AG04450 (cell line): ENCODE measurements at regions of chr9 and their contacts with region 1.

Region 1: GRCh38 chr9:127586537-127586936 is 25.5 kb upstream of the STXBP1 start:
- DNase-seq: no peak
- H3K4me3 ChIP-seq: no peak overlapping the region
- H3K27ac ChIP-seq: no peak overlapping the region
- H3K27me3 ChIP-seq: no peaks in the 10 kb centered on the region
- CTCF ChIP-seq: peak; percentile 94

Region 2: GRCh38 chr9:126844085-126844484 is 742.5 kb before region 1 on chr9:
- CTCF ChIA-PET with region 1: no interaction called
- POLR2A ChIA-PET with region 1: no interaction called
- DNase-seq: peak; percentile 20
- H3K4me3 ChIP-seq: no peak overlapping the region
- H3K27ac ChIP-seq: no peak overlapping the region
- H3K27me3 ChIP-seq: no peaks in the 10 kb centered on the region
- CTCF ChIP-seq: no peak

Region 3: GRCh38 chr9:127380479-127380878 is 206.1 kb before region 1 on chr9:
- CTCF ChIA-PET with region 1: no interaction called
- POLR2A ChIA-PET with region 1: no interaction called
- DNase-seq: no peak
- H3K4me3 ChIP-seq: no peak overlapping the region
- H3K27ac ChIP-seq: no peak overlapping the region
- H3K27me3 ChIP-seq: peaks cover 16% of the 10 kb centered on the region
- CTCF ChIP-seq: no peak

Region 4: GRCh38 chr9:127450830-127451724 is 135.5 kb before region 1 on chr9 and contains the starts of genes LRSAM1 and RPL12:
- CTCF ChIA-PET with region 1: interaction called, 4 read pairs
- POLR2A ChIA-PET with region 1: interaction called, 10 read pairs
- DNase-seq: peak; percentile 93
- H3K4me3 ChIP-seq: peak within 1 kb of the TSS; percentile 96
- H3K27ac ChIP-seq: peak within 1 kb of the TSS; percentile 89
- H3K27me3 ChIP-seq: no peaks in the 10 kb centered on the region
- CTCF ChIP-seq: no peak
- polyA plus RNA-seq, gene LRSAM1: 3.4 and 4.8 TPM in 2 replicates
- polyA plus RNA-seq, gene RPL12: 2,379 and 2,541 TPM in 2 replicates

Region 5: GRCh38 chr9:127525401-127526187 is 60.9 kb before region 1 on chr9:
- CTCF ChIA-PET with region 1: interaction called, 30 read pairs
- POLR2A ChIA-PET with region 1: interaction called, 8 read pairs
- DNase-seq: no peak
- H3K4me3 ChIP-seq: no peak overlapping the region
- H3K27ac ChIP-seq: peak overlapping the region; percentile 21
- H3K27me3 ChIP-seq: no peaks in the 10 kb centered on the region
- CTCF ChIP-seq: peak; percentile 67

Region 6: DNA sequence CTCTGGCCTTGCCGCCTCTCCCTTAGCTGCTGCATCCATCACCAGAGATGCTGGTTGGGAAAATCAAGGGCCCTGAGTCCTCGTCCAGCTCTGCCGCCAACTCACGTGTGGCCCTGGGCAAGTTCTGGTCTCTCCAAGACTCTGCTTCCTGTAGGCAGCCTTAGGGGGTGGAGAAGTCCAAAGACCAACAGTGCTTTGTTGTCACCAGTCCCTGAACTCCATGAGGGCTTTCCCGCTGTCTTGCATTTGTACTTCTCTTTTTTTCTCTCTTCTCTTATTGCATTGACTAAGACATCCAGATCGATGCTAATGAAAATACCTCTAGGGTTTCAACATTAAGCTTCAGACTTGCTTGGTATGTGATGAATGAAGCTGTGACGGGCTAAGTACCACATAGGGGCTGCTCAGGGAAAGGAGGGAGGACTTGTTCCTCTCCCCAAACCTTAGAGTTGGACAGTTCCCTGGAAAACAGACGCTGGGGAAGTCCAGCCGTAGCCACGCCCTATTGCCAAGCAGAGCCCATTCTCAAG is 38.1 kb before region 1 on chr9:
- CTCF ChIA-PET with region 1: no interaction called
- POLR2A ChIA-PET with region 1: no interaction called
- DNase-seq: no peak
- H3K4me3 ChIP-seq: no peak overlapping the region
- H3K27ac ChIP-seq: peak overlapping the region; percentile 31
- H3K27me3 ChIP-seq: no peaks in the 10 kb centered on the region
- CTCF ChIP-seq: no peak

Region 7: GRCh38 chr9:127568971-127569885 is 17.3 kb before region 1 on chr9:
- CTCF ChIA-PET with region 1: interaction called, 11 read pairs
- POLR2A ChIA-PET with region 1: interaction called, 12 read pairs
- DNase-seq: peak; percentile 49
- H3K4me3 ChIP-seq: peak overlapping the region; percentile 87
- H3K27ac ChIP-seq: peak overlapping the region; percentile 91
- H3K27me3 ChIP-seq: no peaks in the 10 kb centered on the region
- CTCF ChIP-seq: no peak

Region 8: GRCh38 chr9:127916665-127917613 is 330.4 kb after region 1 on chr9 and contains the start of gene ST6GALNAC4:
- CTCF ChIA-PET with region 1: interaction called, 19 read pairs
- POLR2A ChIA-PET with region 1: no interaction called
- DNase-seq: peak; percentile 70
- H3K4me3 ChIP-seq: peak within 1 kb of the TSS; percentile 80
- H3K27ac ChIP-seq: peak within 1 kb of the TSS; percentile 21
- H3K27me3 ChIP-seq: no peaks in the 10 kb centered on the region
- CTCF ChIP-seq: no peak
- polyA plus RNA-seq, gene ST6GALNAC4: 15.0 and 24.3 TPM in 2 replicates